Activated CD4-positive, alpha-beta T cell treated with anti-CD3 and anti-CD28 coated beads, Interleukin-2, amount 10 ng/mL, durations not matched to agents 7 days and 5 days (primary cell): ENCODE measurements at regions of chr6 and their contacts with region 1.

Region 1: GRCh38 chr6:149065658-149066556 is 251.6 kb upstream of the TAB2 start:
- DNase-seq: peak; percentile 67
- H3K4me3 Mint-ChIP-seq: peak overlapping the region; percentile 14
- H3K27ac Mint-ChIP-seq: peak overlapping the region; percentile 94
- H3K4me1 Mint-ChIP-seq: peaks cover 46% of the 10 kb centered on the region
- H3K27me3 Mint-ChIP-seq: no peaks in the 10 kb centered on the region

Region 2: DNA sequence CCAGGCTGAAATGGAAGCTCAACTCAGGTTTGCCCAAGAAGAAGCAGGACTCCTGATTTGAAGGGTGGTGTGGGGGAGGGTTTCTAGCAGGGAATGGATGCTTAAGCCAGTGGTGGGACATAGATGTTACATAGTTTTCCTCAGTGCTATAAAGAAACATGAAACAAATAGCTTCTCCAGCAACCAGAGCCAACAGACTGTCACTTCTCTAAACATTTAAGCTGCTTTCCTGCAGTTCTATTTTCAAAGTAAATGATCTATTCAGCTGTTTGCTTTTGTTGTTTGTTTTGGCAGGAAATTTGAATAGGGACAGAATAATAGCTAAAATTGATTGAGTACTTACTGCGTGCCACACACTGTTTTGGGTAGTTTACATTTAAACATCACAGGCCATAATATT is 150.1 kb before region 1 on chr6:
- CTCF ChIA-PET with region 1: no interaction called
- POLR2A ChIA-PET with region 1: no interaction called
- DNase-seq: no peak
- H3K4me3 Mint-ChIP-seq: no peak overlapping the region
- H3K27ac Mint-ChIP-seq: no peak overlapping the region
- H3K4me1 Mint-ChIP-seq: no peaks in the 10 kb centered on the region
- H3K27me3 Mint-ChIP-seq: no peaks in the 10 kb centered on the region

Region 3: DNA sequence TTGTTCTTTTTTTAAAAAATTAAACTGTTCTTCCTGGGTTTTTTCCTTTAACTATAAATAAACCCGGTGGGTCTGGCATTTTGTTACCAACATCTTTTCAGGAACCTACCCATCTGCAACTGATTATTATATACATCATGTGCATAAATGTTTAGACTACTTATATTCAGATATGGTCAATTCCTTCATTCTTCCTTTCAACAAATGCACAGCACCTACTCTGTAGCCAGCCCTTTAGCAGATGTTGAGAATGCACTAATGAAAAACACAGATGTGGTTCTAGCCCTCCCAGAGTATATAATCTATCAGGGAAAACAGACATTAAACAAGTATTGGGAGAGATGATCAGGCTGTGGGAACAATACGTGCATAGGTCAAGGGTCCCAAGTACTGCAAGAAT is 81.9 kb before region 1 on chr6:
- CTCF ChIA-PET with region 1: no interaction called
- POLR2A ChIA-PET with region 1: no interaction called
- DNase-seq: no peak
- H3K4me3 Mint-ChIP-seq: no peak overlapping the region
- H3K27ac Mint-ChIP-seq: no peak overlapping the region
- H3K4me1 Mint-ChIP-seq: no peaks in the 10 kb centered on the region
- H3K27me3 Mint-ChIP-seq: peaks cover 17% of the 10 kb centered on the region

Region 4: GRCh38 chr6:148999929-149000468 is 65.9 kb before region 1 on chr6:
- CTCF ChIA-PET with region 1: no interaction called
- POLR2A ChIA-PET with region 1: no interaction called
- DNase-seq: no peak
- H3K4me3 Mint-ChIP-seq: no peak overlapping the region
- H3K27ac Mint-ChIP-seq: no peak overlapping the region
- H3K4me1 Mint-ChIP-seq: peaks cover 23% of the 10 kb centered on the region
- H3K27me3 Mint-ChIP-seq: peaks cover 5% of the 10 kb centered on the region

Region 5: GRCh38 chr6:149032599-149033405 is 33.1 kb before region 1 on chr6:
- CTCF ChIA-PET with region 1: interaction called, 13 read pairs
- POLR2A ChIA-PET with region 1: no interaction called
- DNase-seq: peak; percentile 27
- H3K4me3 Mint-ChIP-seq: peak overlapping the region; percentile 64
- H3K27ac Mint-ChIP-seq: peak overlapping the region; percentile 92
- H3K4me1 Mint-ChIP-seq: peaks cover 69% of the 10 kb centered on the region
- H3K27me3 Mint-ChIP-seq: no peaks in the 10 kb centered on the region

Region 6: GRCh38 chr6:149054559-149055194 is 11.2 kb before region 1 on chr6:
- CTCF ChIA-PET with region 1: interaction called, 16 read pairs
- POLR2A ChIA-PET with region 1: interaction called, 3 read pairs
- DNase-seq: no peak
- H3K4me3 Mint-ChIP-seq: no peak overlapping the region
- H3K27ac Mint-ChIP-seq: peak overlapping the region; percentile 57
- H3K4me1 Mint-ChIP-seq: peaks cover 33% of the 10 kb centered on the region
- H3K27me3 Mint-ChIP-seq: no peaks in the 10 kb centered on the region